Activated B cell treated with CpG ODN at 0.5 μM for 24 hours (primary cell): ENCODE measurements at regions of chr1 and their contacts with region 1.

Region 1: DNA sequence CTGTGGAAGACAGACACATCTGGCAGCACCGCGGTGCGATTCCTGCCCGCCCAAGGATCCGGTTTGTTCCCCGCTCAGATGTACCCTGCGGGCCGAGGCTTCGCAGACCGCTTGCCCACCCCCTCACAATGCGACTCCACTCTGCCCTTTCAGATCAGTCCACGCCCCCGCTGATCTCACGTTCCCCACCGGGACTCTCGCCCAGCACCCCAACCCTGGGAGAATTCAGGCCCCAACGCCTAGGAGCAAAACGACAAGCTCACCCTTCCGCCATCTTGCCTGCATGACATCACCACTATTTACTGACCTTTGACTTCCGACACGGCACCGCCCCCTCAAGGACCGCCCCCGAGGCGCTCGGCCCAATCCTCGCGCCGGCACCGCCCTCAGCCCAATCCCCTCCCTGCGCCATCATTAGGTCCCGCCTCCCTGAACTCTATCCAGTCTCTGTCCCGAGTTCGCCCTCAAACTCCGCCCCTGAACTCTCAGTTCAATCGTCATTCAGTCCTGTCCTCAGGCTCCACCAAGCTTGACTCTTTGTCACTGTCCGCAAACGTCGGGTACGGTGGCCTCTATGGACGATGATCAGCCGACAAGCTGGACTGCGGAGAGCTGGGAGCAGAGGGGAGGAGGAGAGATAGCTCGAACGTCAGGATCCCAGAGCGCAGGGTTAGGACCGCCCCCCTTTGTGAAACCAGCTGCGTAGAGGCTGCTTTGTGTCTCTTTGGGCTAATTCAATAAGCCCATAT is at the start of gene BSDC1:
- DNase-seq: peak; percentile 97
- ATAC-seq: peak; percentile 99
- H3K4me3 Mint-ChIP-seq: peak within 1 kb of the TSS; percentile 100
- H3K27ac Mint-ChIP-seq: peak within 1 kb of the TSS; percentile 98
- H3K4me1 Mint-ChIP-seq: peaks cover 27% of the 10 kb centered on the region
- H3K27me3 Mint-ChIP-seq: no peaks in the 10 kb centered on the region
- CTCF ChIP-seq: no peak
- total RNA-seq, gene BSDC1: 51.8 and 72.2 TPM in 2 replicates

Region 2: DNA sequence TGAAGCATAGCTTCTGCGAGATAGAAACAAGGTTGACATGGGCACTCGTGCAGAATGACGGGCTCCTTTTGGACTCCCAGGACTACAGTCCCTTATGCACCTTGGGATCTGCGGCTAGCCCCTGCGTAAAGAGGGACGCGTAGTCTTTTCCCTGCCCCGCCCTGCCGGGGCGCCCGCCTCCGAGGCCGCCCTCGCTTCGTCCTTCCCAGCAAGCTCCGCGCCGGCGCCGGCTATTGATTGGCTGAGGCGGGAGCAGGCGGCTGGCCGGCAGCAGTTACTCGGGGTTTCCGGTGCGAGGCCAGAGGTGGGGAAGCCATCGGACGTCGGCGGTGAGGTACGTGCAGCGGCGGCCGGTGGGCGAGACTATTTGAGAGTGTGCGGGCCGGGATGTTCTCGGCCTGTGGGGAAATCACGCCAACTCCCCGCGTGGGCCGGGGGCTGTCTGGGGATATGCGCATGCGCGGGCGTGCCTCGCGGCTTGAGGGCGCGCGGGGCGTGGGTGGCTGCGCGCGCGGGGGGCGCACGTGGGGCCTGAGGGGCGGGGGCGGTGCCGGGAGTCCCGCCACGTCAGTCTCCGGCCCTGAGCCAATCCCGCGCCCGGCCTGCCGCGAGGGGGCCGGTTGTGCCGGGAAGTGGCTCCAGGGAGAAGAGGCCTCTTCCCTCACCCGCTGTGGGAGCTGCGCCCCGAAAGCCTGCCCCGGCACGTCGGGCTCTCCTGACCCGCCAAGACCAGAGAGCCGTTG is 214.7 kb before region 1 on chr1 and contains the start of gene TXLNA:
- CTCF ChIA-PET with region 1: no interaction called
- POLR2A ChIA-PET with region 1: interaction called, 19 read pairs
- intact Hi-C with region 1: loop called (anchors 1 kb)
- DNase-seq: peak; percentile 89
- ATAC-seq: peak; percentile 91
- H3K4me3 Mint-ChIP-seq: peak within 1 kb of the TSS; percentile 90
- H3K27ac Mint-ChIP-seq: peak within 1 kb of the TSS; percentile 98
- H3K4me1 Mint-ChIP-seq: peaks cover 40% of the 10 kb centered on the region
- H3K27me3 Mint-ChIP-seq: no peaks in the 10 kb centered on the region
- CTCF ChIP-seq: no peak
- total RNA-seq, gene TXLNA: 52.0 and 54.1 TPM in 2 replicates

Region 3: DNA sequence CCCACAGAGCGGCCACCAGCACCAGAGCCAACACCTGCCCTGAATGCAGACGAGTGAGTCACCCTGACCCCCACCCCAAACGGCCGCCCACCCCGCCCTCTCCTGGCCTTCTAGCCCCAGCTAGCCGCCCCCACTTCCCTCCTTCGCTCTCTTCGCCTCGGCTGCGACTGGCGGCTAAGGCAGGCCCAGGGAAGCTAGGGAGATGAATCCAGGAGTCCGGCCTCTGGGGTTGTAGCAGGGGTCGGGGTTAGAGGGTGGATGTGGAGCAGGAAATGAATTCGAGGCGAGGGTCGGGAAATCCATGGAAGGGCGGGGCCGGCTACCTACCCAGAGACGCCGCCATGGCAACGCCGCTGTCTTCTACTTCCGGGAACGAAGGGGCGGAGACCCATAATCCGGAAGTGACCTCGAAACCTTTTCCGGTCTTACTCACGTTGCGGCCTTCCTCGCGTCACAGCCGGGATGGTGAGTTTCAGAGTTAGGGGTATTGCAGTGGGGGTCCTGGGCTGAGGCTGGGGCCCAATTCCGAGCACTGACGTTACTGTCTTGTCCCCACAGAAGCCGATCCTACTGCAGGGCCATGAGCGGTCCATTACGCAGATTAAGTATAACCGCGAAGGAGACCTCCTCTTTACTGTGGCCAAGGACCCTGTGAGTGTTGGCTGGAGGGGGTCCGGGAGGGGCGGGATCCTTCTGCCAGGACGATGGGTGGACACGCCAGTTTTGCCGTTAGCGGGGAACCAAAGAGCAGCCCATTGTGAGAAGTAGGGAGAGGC is 172.1 kb before region 1 on chr1 and contains the starts of genes EIF3I and TMEM234:
- CTCF ChIA-PET with region 1: no interaction called
- POLR2A ChIA-PET with region 1: interaction called, 5 read pairs
- intact Hi-C with region 1: loop called (anchors 2 kb)
- DNase-seq: peak; percentile 80
- ATAC-seq: peak; percentile 85
- H3K4me3 Mint-ChIP-seq: peak within 1 kb of the TSS; percentile 96
- H3K27ac Mint-ChIP-seq: peak within 1 kb of the TSS; percentile 95
- H3K4me1 Mint-ChIP-seq: peaks cover 50% of the 10 kb centered on the region
- H3K27me3 Mint-ChIP-seq: no peaks in the 10 kb centered on the region
- CTCF ChIP-seq: no peak
- total RNA-seq, gene EIF3I: 196 and 213 TPM in 2 replicates
- total RNA-seq, gene TMEM234: 31.8 and 35.5 TPM in 2 replicates

Region 4: GRCh38 chr1:32240140-32240951 is 154.0 kb before region 1 on chr1:
- CTCF ChIA-PET with region 1: interaction called, 4 read pairs
- POLR2A ChIA-PET with region 1: interaction called, 15 read pairs
- intact Hi-C with region 1: no loop called
- DNase-seq: peak; percentile 68
- ATAC-seq: peak; percentile 77
- H3K4me3 Mint-ChIP-seq: peak overlapping the region; percentile 89
- H3K27ac Mint-ChIP-seq: peak overlapping the region; percentile 87
- H3K4me1 Mint-ChIP-seq: peaks cover 21% of the 10 kb centered on the region
- H3K27me3 Mint-ChIP-seq: no peaks in the 10 kb centered on the region
- CTCF ChIP-seq: no peak

Region 5: GRCh38 chr1:32351399-32352238 is 42.7 kb before region 1 on chr1:
- CTCF ChIA-PET with region 1: no interaction called
- POLR2A ChIA-PET with region 1: interaction called, 11 read pairs
- intact Hi-C with region 1: loop called (anchors 1 kb)
- DNase-seq: peak; percentile 90
- ATAC-seq: peak; percentile 96
- H3K4me3 Mint-ChIP-seq: peak overlapping the region; percentile 91
- H3K27ac Mint-ChIP-seq: peak overlapping the region; percentile 91
- H3K4me1 Mint-ChIP-seq: peaks cover 22% of the 10 kb centered on the region
- H3K27me3 Mint-ChIP-seq: no peaks in the 10 kb centered on the region
- CTCF ChIP-seq: no peak

Region 6: DNA sequence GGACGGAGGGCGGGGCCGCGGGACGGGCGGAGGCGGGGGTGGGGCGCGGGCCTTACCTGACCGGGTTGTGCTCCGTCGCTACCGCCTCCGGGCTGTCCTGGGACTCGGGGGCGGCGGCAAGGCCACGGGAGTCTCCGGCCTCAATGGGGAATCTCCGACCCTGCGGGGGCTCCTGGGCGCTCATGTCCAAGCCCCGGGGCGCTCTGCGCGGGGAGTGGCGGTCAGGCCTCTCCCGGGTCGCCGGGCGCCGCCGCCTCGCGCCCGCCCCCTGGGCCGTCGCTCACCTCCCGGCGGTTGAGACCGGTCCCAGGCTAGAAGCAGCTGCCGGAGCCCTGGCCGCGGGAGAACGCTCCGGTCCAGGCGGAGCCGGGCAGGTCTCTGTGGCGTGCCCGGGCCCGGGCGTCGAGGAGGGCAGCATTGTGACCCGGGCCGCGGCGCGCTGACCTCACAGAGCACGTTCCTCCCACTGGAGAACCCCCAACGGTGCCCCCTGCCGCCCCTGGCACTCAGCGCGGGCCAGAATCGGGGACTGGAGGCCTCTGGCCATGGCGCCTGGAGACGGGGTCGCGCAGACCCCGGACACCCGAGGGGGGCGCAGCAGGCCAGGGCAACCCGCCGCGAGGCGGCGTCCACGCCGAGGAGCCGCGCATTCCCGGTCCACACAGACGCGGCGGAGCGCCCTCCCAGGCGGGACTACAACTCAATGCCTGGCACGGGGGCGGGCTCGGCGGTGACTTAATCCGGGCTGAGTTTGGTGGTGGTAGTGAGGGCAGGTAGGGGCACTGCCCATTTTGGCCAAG is 32.4 kb before region 1 on chr1:
- CTCF ChIA-PET with region 1: interaction called, 5 read pairs
- POLR2A ChIA-PET with region 1: interaction called, 10 read pairs
- intact Hi-C with region 1: no loop called
- DNase-seq: peak; percentile 46
- ATAC-seq: peak; percentile 38
- H3K4me3 Mint-ChIP-seq: peak overlapping the region; percentile 58
- H3K27ac Mint-ChIP-seq: peak overlapping the region; percentile 65
- H3K4me1 Mint-ChIP-seq: peaks cover 31% of the 10 kb centered on the region
- H3K27me3 Mint-ChIP-seq: no peaks in the 10 kb centered on the region
- CTCF ChIP-seq: no peak